Activated B cell treated with CpG ODN at 0.5 μM for 24 hours (primary cell): ENCODE measurements at regions of chr7 and their contacts with region 1.

Region 1: DNA sequence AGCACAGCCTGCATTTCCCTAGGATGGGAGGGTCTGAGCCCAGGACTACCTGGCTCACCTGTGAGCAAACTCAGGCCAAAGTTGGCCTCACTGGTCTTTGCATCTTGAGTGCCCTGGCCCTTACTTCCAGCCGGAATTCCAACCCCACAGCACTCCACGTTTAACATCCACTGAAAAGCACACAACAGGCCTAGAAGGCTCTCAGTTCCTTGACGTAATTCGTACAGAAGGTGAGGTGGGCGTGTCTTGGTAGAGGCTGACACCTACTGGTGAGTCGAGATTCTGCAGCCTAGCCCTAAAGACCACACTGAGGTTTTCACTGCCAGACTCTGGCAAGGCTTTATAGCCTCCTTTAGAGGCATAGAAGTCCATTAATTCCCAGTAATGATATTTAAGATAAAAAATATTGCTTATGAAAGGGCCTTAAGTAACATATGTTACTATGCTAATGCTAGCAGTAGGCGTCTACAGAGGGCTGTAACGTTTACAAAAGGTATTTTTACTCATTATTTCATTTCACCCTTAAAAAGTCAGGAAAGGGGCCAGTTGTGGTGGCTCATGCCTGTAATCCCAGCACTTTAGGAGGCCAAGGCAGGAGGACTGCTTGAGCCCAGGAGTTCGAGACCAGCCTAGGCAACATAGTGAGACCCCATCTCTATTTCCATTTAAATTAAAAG is 95.8 kb downstream of the HIP1 start:
- DNase-seq: peak; percentile 39
- ATAC-seq: peak; percentile 90
- H3K4me3 Mint-ChIP-seq: no peak overlapping the region
- H3K27ac Mint-ChIP-seq: no peak overlapping the region
- H3K4me1 Mint-ChIP-seq: peaks cover 17% of the 10 kb centered on the region
- H3K27me3 Mint-ChIP-seq: no peaks in the 10 kb centered on the region
- CTCF ChIP-seq: peak; percentile 41

Region 2: GRCh38 chr7:75662579-75663301 is 19.8 kb after region 1 on chr7:
- CTCF ChIA-PET with region 1: interaction called, 4 read pairs
- POLR2A ChIA-PET with region 1: interaction called, 3 read pairs
- intact Hi-C with region 1: loop called (anchors 2 kb)
- DNase-seq: peak; percentile 44
- ATAC-seq: peak; percentile 88
- H3K4me3 Mint-ChIP-seq: peak overlapping the region; percentile 55
- H3K27ac Mint-ChIP-seq: peak overlapping the region; percentile 84
- H3K4me1 Mint-ChIP-seq: peaks cover 29% of the 10 kb centered on the region
- H3K27me3 Mint-ChIP-seq: no peaks in the 10 kb centered on the region
- CTCF ChIP-seq: no peak